CD8-positive, alpha-beta memory T cell (primary cell): ENCODE measurements at regions of chr22 and their contacts with region 1.

Region 1: GRCh38 chr22:22753526-22754267 is 109.3 kb downstream of the GGTLC2 start:
- DNase-seq: peak; percentile 69 to 88 (median 75)
- H3K4me3 ChIP-seq: no peak overlapping the region
- H3K4me3 Mint-ChIP-seq: peak overlapping the region; percentile 38 to 87 (median 71)
- H3K27ac ChIP-seq: no peak overlapping the region
- H3K27ac Mint-ChIP-seq: peak overlapping the region; percentile 67 to 98 (median 92)
- H3K4me1 ChIP-seq: peaks cover 50% of the 10 kb centered on the region
- H3K4me1 Mint-ChIP-seq: peaks cover 74 to 82% (median 80%) of the 10 kb centered on the region in 3 donors
- H3K27me3 ChIP-seq: no peaks in the 10 kb centered on the region
- H3K27me3 Mint-ChIP-seq: no peaks in the 10 kb centered on the region

Region 2: DNA sequence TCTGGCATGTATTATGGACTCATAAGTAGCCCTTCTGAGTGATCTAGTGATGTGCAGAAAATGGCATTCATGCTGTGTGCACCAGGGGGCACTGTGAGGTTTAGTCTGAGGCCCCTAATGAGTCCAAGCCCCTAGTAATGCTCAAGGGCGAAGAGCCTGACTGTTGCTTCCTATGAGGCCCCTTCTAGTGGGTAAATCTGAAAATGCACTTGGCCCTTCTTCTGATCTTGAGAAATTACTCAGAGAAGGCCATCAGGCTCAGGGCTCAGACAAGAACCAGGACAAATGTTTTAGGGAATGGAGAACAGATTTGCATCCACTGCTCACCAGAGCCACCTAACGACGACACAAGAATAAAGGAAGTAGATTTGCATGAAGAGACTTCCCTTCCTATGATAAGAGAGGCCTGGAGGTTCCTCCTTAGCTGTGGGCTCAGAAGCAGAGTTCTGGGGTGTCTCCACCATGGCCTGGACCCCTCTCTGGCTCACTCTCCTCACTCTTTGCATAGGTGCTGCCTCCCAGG is 33.4 kb before region 1 on chr22:
- CTCF ChIA-PET with region 1: interaction called, 32 read pairs
- POLR2A ChIA-PET with region 1: interaction called, 5 read pairs
- DNase-seq: peak; percentile 20 to 78 (median 37)
- H3K4me3 ChIP-seq: no peak overlapping the region
- H3K4me3 Mint-ChIP-seq: peak overlapping the region in 6 of 7 donors; percentile 34 to 66 (median 54)
- H3K27ac ChIP-seq: peak overlapping the region; percentile 4
- H3K27ac Mint-ChIP-seq: peak overlapping the region; percentile 85 to 97 (median 91)
- H3K4me1 ChIP-seq: peaks cover 26% of the 10 kb centered on the region
- H3K4me1 Mint-ChIP-seq: peaks cover 50 to 56% (median 56%) of the 10 kb centered on the region in 3 donors
- H3K27me3 ChIP-seq: no peaks in the 10 kb centered on the region
- H3K27me3 Mint-ChIP-seq: no peaks in the 10 kb centered on the region

Region 3: DNA sequence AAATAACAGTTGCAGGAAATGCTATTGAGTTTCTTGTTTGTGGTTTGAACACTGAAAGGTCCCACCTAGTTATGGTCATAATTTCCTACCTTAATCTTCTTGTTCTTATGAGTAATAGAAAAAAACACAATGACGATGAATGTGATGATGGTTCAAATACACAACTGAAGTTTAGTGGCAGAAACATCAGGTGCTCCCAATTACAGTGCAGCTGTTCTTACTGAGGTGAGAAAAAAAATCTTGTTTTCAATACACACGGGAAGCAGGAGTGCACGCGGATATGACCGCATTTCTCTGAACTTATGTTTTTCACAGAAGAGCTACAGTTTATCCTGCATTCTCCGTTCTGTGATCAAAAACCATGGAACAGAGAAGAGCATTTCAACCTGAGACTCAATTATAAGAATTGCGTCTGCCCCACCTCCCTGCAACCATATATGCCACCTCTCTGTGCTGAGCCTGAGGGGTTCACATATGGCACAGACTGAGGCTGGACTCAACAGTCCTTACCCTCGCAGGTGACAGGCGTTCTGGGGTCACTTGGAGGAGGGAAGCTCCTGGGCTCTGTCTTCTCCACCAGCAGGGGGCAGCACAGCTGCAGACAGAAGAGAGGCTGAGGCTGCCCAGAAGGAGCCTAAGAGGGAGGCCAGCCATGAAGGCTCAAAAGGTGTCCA is 34.2 kb after region 1 on chr22:
- CTCF ChIA-PET with region 1: interaction called, 86 read pairs
- POLR2A ChIA-PET with region 1: interaction called, 7 read pairs
- DNase-seq: peak; percentile 46 to 84 (median 57)
- H3K4me3 ChIP-seq: no peak overlapping the region
- H3K4me3 Mint-ChIP-seq: peak overlapping the region; percentile 22 to 83 (median 52)
- H3K27ac ChIP-seq: peak overlapping the region; percentile 38
- H3K27ac Mint-ChIP-seq: peak overlapping the region; percentile 78 to 99 (median 90)
- H3K4me1 ChIP-seq: peaks cover 57% of the 10 kb centered on the region
- H3K4me1 Mint-ChIP-seq: peaks cover 79 to 92% (median 80%) of the 10 kb centered on the region in 3 donors
- H3K27me3 ChIP-seq: no peaks in the 10 kb centered on the region
- H3K27me3 Mint-ChIP-seq: no peaks in the 10 kb centered on the region

Region 4: GRCh38 chr22:22810018-22810427 is 56.3 kb after region 1 on chr22:
- CTCF ChIA-PET with region 1: interaction called, 194 read pairs
- POLR2A ChIA-PET with region 1: interaction called, 8 read pairs
- DNase-seq: peak; percentile 58 to 88 (median 74)
- H3K4me3 ChIP-seq: no peak overlapping the region
- H3K4me3 Mint-ChIP-seq: peak overlapping the region in 6 of 7 donors; percentile 60 to 87 (median 82)
- H3K27ac ChIP-seq: no peak overlapping the region
- H3K27ac Mint-ChIP-seq: peak overlapping the region; percentile 82 to 97 (median 88)
- H3K4me1 ChIP-seq: peaks cover 18% of the 10 kb centered on the region
- H3K4me1 Mint-ChIP-seq: peaks cover 86 to 94% (median 92%) of the 10 kb centered on the region in 3 donors
- H3K27me3 ChIP-seq: no peaks in the 10 kb centered on the region
- H3K27me3 Mint-ChIP-seq: no peaks in the 10 kb centered on the region

Region 5: DNA sequence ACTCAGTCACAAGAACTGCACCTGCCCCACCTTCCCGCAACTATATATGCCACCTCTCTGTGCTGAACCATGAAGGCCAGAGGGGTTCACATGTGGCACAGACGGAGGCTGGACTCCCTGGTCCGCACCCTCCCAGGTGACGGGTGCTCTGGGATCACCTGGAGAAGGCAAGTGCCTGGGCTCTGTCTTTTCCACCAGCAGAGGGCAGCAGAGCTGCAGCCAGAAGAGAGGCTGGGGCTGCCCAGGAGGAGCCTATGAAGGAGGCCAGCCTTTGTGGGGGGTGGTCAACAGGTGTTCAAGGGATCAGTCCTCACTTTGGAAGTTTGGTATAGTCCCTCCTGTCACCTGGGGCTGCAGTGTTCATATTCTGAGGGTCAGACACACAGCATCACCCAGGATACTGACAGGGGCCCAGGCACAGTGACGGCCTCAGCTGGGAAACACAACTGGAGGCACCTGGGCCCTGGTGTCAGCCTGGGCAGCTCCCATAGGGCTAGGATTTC is 94.7 kb after region 1 on chr22:
- CTCF ChIA-PET with region 1: interaction called, 37 read pairs
- POLR2A ChIA-PET with region 1: no interaction called
- DNase-seq: peak; percentile 49 to 83 (median 59)
- H3K4me3 ChIP-seq: no peak overlapping the region
- H3K4me3 Mint-ChIP-seq: peak overlapping the region in 3 of 7 donors; percentile 27 to 74 (median 38)
- H3K27ac ChIP-seq: no peak overlapping the region
- H3K27ac Mint-ChIP-seq: peak overlapping the region in 4 of 8 donors; percentile 47 to 67 (median 66)
- H3K4me1 ChIP-seq: peaks cover 10% of the 10 kb centered on the region
- H3K4me1 Mint-ChIP-seq: peaks cover 56 to 67% (median 65%) of the 10 kb centered on the region in 3 donors
- H3K27me3 ChIP-seq: no peaks in the 10 kb centered on the region
- H3K27me3 Mint-ChIP-seq: no peaks in the 10 kb centered on the region

Region 6: GRCh38 chr22:22870577-22871404 is 117.1 kb after region 1 on chr22:
- CTCF ChIA-PET with region 1: interaction called, 27 read pairs
- POLR2A ChIA-PET with region 1: no interaction called
- DNase-seq: no peak
- H3K4me3 ChIP-seq: no peak overlapping the region
- H3K4me3 Mint-ChIP-seq: no peak overlapping the region
- H3K27ac ChIP-seq: no peak overlapping the region
- H3K27ac Mint-ChIP-seq: peak overlapping the region in 3 of 8 donors; percentile 37 to 83 (median 38)
- H3K4me1 ChIP-seq: peaks cover 9% of the 10 kb centered on the region
- H3K4me1 Mint-ChIP-seq: peaks cover 28 to 39% (median 29%) of the 10 kb centered on the region in 3 donors
- H3K27me3 ChIP-seq: no peaks in the 10 kb centered on the region
- H3K27me3 Mint-ChIP-seq: peaks cover 0 to 4% of the 10 kb centered on the region in 2 donors

Region 7: DNA sequence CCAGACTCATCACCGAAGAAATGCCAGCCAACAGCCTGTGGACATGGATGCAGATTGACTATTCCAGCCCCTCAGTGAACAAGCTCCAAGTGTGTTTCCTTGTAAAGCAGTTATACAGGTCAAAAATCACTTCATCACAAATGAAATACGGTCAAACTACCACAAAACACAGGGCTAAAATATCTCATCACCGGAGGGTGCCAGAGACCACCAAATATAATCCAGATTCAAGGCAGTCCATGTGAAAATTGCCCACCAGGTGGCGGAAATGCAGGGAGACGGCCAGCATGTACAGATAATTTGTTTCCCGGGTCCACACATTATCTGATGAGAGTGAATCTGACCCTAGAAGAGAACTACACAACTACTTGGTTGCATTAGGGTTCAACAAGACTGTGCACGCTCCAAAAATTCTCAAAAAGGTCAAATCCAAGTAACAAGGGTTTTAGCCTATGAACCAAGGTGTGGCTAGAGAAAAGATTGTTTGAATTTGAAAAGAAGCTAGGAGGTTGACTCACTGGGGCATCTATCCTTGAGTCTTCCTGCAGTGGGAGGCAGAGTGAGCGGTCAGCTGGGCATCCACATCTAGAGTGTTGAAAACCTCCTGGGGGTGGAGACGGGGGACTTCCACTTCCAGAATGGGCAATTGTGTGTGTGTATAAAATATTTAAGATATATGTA is 205.6 kb after region 1 on chr22:
- CTCF ChIA-PET with region 1: interaction called, 18 read pairs
- POLR2A ChIA-PET with region 1: no interaction called
- DNase-seq: peak; percentile 59 to 80 (median 70)
- H3K4me3 ChIP-seq: no peak overlapping the region
- H3K4me3 Mint-ChIP-seq: no peak overlapping the region
- H3K27ac ChIP-seq: no peak overlapping the region
- H3K27ac Mint-ChIP-seq: no peak overlapping the region
- H3K4me1 ChIP-seq: no peaks in the 10 kb centered on the region
- H3K4me1 Mint-ChIP-seq: peaks cover 0 to 6% (median 3%) of the 10 kb centered on the region in 3 donors
- H3K27me3 ChIP-seq: peaks cover 4% of the 10 kb centered on the region
- H3K27me3 Mint-ChIP-seq: peaks cover 15 to 27% of the 10 kb centered on the region in 2 donors